AG04450 (cell line): ENCODE measurements at regions of chr7 and their contacts with region 1.

Region 1: DNA sequence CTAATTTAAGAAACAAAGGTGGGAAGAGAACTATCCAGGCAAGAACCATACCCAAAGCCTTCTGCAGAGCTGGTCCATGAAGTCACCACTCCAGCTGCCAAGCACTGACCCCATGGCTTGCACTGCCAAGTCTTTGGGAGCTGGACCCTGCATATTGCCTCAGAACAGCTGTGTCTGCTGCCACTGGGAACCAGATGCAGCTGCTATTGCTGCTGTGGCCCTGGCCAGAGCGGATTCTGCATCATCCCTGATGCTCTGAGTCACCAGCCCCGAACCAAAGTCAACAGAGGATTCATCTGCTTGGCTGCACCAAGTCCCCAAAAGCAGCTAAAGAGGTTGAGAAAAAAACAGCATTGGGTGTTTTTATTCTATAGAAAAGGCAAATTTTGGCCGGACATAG is 39.2 kb upstream of the GSAP start:
- DNase-seq: peak; percentile 79
- H3K4me3 ChIP-seq: no peak overlapping the region
- H3K27ac ChIP-seq: peak overlapping the region; percentile 42
- H3K27me3 ChIP-seq: no peaks in the 10 kb centered on the region
- CTCF ChIP-seq: no peak

Region 2: DNA sequence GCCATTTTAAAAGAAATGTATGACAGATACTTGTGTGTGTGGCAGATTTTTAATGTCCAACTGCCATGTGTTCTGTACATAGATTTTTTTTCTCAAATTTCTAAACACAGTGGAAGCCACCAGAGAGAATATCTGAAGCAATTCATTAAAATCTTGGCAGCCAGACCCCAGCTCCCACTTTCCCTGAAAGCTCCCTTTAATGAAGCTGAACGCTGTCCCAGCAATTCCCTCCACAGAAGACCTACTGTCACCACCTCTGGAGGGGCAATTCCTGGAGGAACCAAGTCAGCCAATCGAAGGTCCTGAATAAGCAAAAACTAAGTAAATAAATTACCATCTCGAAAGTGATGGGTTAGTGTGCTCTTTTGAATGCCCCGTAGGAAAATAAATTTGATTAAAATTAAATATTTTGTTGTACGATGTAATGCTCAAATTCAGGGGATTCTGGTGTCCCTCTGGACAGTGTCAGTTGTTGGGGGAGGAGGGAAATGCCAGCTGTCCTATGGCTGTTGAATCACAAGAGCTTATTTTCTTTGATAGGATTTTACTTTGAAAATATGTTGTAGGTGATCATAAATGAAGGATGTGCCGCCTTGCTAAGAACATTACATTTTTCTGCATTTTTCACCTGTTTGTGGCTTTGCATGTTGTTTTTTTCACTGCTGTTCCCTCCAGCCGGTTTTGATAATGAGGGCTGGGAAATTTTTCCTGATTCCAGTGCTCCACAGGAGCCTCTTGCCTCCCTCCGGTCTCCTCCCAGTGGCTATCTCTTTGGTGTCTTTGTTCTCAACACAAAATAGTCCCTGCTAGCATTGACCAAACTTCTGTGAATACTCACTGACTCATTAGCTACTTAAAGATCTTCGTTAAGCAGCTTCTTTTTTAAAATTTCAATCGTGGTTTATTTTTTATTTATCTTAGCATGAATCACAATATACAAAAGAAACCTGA is 29.9 kb before region 1 on chr7:
- CTCF ChIA-PET with region 1: no interaction called
- POLR2A ChIA-PET with region 1: interaction called, 10 read pairs
- DNase-seq: peak; percentile 48
- H3K4me3 ChIP-seq: peak overlapping the region; percentile 29
- H3K27ac ChIP-seq: peak overlapping the region; percentile 83
- H3K27me3 ChIP-seq: no peaks in the 10 kb centered on the region
- CTCF ChIP-seq: no peak

Region 3: GRCh38 chr7:77531038-77531437 is 75.7 kb after region 1 on chr7:
- CTCF ChIA-PET with region 1: no interaction called
- POLR2A ChIA-PET with region 1: no interaction called
- DNase-seq: no peak
- H3K4me3 ChIP-seq: no peak overlapping the region
- H3K27ac ChIP-seq: no peak overlapping the region
- H3K27me3 ChIP-seq: no peaks in the 10 kb centered on the region
- CTCF ChIP-seq: no peak